ENCODE measurements at regions of chr12 and their contacts with region 1.

Region 1: DNA sequence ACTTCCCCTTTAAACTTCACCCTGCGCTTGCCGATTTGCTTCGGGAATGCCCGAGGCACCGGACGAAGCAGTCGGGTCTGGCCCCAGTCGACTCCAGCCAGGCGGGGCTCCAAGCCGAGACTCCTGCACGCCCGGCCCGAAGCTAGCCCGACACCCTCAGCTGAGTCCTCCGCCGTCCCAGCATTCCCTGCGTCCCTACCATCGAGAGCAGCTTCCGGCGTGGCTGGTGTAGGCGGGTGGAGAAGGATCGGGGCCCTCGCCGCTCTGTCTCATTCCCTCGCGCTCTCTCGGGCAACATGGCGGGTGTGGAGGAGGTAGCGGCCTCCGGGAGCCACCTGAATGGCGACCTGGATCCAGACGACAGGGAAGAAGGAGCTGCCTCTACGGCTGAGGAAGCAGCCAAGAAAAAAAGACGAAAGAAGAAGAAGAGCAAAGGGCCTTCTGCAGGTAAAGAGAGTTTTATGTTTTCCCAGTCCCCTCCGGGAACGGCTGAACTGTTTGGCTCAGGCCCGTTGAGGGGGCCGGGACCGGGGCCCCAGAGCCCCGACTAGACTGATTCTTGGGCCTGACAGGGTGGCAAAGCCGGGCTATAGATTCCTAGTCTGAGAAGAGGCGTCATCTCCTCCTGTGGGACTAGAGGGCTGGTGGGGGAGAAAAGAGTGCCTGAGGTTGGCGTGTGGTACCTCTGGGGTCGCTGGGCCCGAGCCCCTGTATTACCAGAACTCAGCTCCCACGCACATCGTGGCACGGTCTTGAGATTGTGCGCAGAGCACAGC is at the start of gene METAP2:
- DNase-seq: peak; percentile 87
- ATAC-seq: peak; percentile 97
- H3K4me3 Mint-ChIP-seq: peak within 1 kb of the TSS; percentile 100
- H3K27ac Mint-ChIP-seq: peak within 1 kb of the TSS; percentile 99
- H3K4me1 Mint-ChIP-seq: peaks cover 51% of the 10 kb centered on the region
- H3K27me3 Mint-ChIP-seq: peaks cover 2% of the 10 kb centered on the region
- CTCF ChIP-seq: no peak
- total RNA-seq, gene METAP2: 63.0 and 67.4 TPM in 2 replicates

Region 2: DNA sequence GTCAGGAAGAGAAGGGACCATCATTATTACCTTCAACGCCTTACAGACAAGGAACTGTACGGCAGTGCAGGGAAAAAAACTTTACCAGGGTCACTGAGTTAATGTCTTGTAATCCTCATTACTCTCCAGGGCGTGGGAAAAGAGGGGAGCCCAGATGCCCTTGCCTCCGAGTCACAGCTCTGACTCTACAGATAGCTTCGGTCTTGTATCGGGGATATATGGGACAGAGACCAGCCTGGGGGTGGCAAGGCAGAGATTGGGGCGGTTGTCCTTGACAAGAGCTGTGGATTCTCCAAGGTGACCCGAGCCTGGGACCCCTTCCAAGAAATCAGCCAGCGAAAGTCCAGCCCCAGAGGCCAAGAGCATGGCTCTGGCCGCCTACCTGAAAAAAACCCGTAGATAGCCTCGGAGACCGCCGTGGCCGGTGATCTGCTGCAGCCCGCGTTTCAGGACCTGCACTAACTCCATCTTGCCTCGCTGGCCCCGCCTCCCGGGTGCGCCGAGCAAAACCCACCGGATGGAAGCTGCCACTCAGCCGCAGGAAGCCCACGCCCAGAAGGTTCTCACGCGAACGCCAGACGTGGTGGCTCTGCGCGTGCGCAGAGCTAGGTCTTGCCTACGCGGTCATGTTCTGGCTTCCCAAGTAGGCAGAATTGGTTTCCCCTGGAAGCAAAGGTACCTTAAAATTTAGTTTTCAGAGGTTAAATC is 470.7 kb before region 1 on chr12 and contains the start of gene NDUFA12:
- CTCF ChIA-PET with region 1: no interaction called
- POLR2A ChIA-PET with region 1: interaction called, 13 read pairs
- intact Hi-C with region 1: loop called (anchors 5 kb)
- DNase-seq: peak; percentile 89
- ATAC-seq: peak; percentile 99
- H3K4me3 Mint-ChIP-seq: peak within 1 kb of the TSS; percentile 94
- H3K27ac Mint-ChIP-seq: peak within 1 kb of the TSS; percentile 90
- H3K4me1 Mint-ChIP-seq: peaks cover 35% of the 10 kb centered on the region
- H3K27me3 Mint-ChIP-seq: no peaks in the 10 kb centered on the region
- CTCF ChIP-seq: no peak
- total RNA-seq, gene NDUFA12: 80.2 and 81.7 TPM in 2 replicates

Region 3: GRCh38 chr12:95117178-95117599 is 356.9 kb before region 1 on chr12:
- CTCF ChIA-PET with region 1: no interaction called
- POLR2A ChIA-PET with region 1: interaction called, 3 read pairs
- intact Hi-C with region 1: loop called (anchors 1 kb)
- DNase-seq: no peak
- ATAC-seq: peak; percentile 84
- H3K4me3 Mint-ChIP-seq: no peak overlapping the region
- H3K27ac Mint-ChIP-seq: no peak overlapping the region
- H3K4me1 Mint-ChIP-seq: peaks cover 3% of the 10 kb centered on the region
- H3K27me3 Mint-ChIP-seq: no peaks in the 10 kb centered on the region
- CTCF ChIP-seq: no peak

Region 4: GRCh38 chr12:95131585-95132340 is 342.3 kb before region 1 on chr12:
- CTCF ChIA-PET with region 1: no interaction called
- POLR2A ChIA-PET with region 1: no interaction called
- intact Hi-C with region 1: no loop called
- DNase-seq: no peak
- ATAC-seq: no peak
- H3K4me3 Mint-ChIP-seq: no peak overlapping the region
- H3K27ac Mint-ChIP-seq: no peak overlapping the region
- H3K4me1 Mint-ChIP-seq: no peaks in the 10 kb centered on the region
- H3K27me3 Mint-ChIP-seq: no peaks in the 10 kb centered on the region
- CTCF ChIP-seq: no peak

Region 5: DNA sequence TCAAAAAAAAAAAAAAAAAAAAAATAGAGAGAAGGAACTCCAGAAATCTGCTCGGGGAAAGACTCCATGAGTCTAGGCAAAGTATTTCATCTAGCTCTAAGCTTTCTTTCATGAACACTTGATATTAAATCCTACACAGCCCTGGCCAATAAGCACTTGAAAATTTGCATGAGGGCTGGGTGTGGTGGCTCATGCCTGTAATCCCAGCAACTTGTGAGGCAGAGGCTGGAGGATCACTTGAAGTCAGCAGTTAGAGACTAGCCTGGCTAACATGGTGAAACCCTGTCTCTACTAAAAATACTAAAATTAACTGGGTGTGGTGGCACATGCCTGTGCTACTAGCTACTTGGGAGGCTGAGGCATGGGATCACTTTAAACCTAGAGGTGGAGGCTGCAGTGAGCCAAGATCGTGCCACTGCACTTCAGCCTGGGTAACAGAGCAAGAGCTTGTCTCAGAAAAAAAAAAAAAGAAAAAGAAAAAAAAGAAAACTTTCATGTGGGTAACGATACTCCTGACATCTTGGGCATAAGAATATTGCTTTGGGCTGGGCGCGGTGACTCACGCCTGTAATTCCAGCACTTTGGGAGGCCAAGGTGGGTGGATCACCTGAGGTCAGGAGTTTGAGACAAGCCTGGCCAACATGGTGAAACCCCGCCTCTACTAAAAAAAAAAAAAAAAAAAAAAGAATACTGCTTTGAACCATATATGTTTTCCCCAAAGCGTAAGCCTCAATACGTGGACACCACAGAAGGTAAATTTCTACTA is 13.0 kb before region 1 on chr12:
- CTCF ChIA-PET with region 1: no interaction called
- POLR2A ChIA-PET with region 1: interaction called, 11 read pairs
- intact Hi-C with region 1: no loop called
- DNase-seq: no peak
- ATAC-seq: no peak
- H3K4me3 Mint-ChIP-seq: no peak overlapping the region
- H3K27ac Mint-ChIP-seq: no peak overlapping the region
- H3K4me1 Mint-ChIP-seq: no peaks in the 10 kb centered on the region
- H3K27me3 Mint-ChIP-seq: no peaks in the 10 kb centered on the region
- CTCF ChIP-seq: no peak

Region 6: DNA sequence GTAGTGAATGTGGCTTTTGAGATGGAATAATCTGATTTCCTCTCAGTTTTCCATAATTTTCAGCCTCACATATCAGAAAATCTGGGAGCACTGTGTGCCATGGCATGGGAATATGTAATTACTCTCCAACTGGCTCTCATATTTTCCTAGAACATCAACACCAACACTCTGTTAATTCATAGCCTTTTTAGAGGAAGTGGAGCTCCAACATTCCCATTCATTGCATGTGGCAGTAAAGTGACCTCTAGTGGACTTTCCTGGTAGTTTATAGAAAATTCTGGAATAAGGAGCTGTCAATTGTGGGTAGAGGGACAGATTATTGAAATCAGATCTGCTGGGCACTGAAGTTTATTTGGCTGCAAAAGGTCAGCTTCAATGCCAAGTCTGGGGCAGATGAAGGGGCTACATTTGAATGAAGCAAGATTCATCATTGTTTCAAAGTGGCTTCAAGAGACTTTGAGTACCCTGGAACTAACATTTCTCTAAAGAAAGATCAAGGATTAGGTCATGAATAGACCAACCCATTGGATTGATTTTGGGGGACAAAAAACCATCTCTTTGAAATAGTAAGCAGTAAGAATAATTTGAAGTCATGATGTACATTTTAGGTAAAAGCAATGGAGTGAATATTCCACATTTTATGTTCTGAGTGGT is 100.9 kb after region 1 on chr12:
- CTCF ChIA-PET with region 1: no interaction called
- POLR2A ChIA-PET with region 1: interaction called, 11 read pairs
- intact Hi-C with region 1: no loop called
- DNase-seq: no peak
- ATAC-seq: no peak
- H3K4me3 Mint-ChIP-seq: peak overlapping the region; percentile 85
- H3K27ac Mint-ChIP-seq: peak overlapping the region; percentile 97
- H3K4me1 Mint-ChIP-seq: peaks cover 49% of the 10 kb centered on the region
- H3K27me3 Mint-ChIP-seq: peaks cover 2% of the 10 kb centered on the region
- CTCF ChIP-seq: no peak

Region 7: DNA sequence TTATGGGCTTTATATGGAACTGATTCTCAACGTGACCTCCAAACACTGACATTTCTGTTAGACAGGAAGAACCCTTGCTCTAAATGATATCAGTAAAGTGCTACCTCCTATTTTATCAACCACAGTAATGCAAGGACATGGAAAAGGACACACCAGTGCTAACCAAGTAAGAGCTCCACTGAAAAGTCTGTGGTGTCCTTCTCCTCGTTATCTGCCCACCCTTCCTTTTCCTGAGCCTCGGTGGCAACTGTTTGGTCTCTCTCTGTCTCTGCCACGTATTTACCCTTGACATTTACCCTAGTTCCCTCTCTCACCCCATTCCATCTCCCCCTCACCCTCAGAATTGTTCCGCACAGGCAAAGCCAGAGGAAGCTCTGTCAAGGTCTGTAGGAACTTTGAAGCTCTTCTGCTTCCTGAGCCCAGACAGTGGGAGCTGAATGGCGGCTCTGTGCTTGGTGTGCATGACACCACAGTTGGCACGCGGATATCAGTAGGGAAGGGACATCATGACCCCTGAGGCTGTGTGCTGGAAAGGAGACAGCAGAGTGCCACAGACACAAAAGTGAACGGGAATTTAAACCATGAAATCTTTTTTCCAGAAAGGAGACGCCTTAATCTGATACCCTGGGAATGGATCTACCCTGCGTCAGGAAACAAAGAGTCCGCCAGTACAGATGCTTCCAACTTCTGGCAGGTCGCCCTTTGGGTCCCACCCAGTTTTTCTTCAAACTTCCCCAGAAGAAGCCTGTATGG is 265.7 kb after region 1 on chr12:
- CTCF ChIA-PET with region 1: no interaction called
- POLR2A ChIA-PET with region 1: no interaction called
- intact Hi-C with region 1: no loop called
- DNase-seq: no peak
- ATAC-seq: no peak
- H3K4me3 Mint-ChIP-seq: no peak overlapping the region
- H3K27ac Mint-ChIP-seq: no peak overlapping the region
- H3K4me1 Mint-ChIP-seq: no peaks in the 10 kb centered on the region
- H3K27me3 Mint-ChIP-seq: peaks cover 10% of the 10 kb centered on the region
- CTCF ChIP-seq: no peak

Region 8: GRCh38 chr12:96035278-96036236 is 561.5 kb after region 1 on chr12 and contains the start of gene LTA4H:
- CTCF ChIA-PET with region 1: no interaction called
- POLR2A ChIA-PET with region 1: interaction called, 5 read pairs
- intact Hi-C with region 1: loop called (anchors 1 kb)
- DNase-seq: peak; percentile 88
- ATAC-seq: peak; percentile 86
- H3K4me3 Mint-ChIP-seq: no peak within 1 kb of the TSS
- H3K27ac Mint-ChIP-seq: no peak within 1 kb of the TSS
- H3K4me1 Mint-ChIP-seq: peaks cover 26% of the 10 kb centered on the region
- H3K27me3 Mint-ChIP-seq: no peaks in the 10 kb centered on the region
- CTCF ChIP-seq: no peak
- total RNA-seq, gene LTA4H: 119 and 124 TPM in 2 replicates

Measured in activated B cell treated with CpG ODN at 0.5 μM for 24 hours (primary cell).